ENCODE measurements at regions of chr15 and their contacts with region 1.

Region 1: GRCh38 chr15:70097337-70098169 is at the start of gene TLE3:
- DNase-seq: peak; percentile 98
- ATAC-seq: peak; percentile 67 to 80 (median 74)
- H3K4me3 ChIP-seq: peak within 1 kb of the TSS; percentile 54 to 90 (median 80)
- H3K27ac ChIP-seq: peak within 1 kb of the TSS; percentile 70 to 99 (median 94)
- H3K4me1 ChIP-seq: peaks cover 32 to 85% (median 73%) of the 10 kb centered on the region in 9 donors
- H3K27me3 ChIP-seq: peaks cover 0 to 7% (median 0%) of the 10 kb centered on the region in 7 donors
- CTCF ChIP-seq: peak; percentile 27 to 71 (median 56)
- total RNA-seq, gene TLE3: 9.7 to 21.7 (median 13.6) TPM

Region 2: DNA sequence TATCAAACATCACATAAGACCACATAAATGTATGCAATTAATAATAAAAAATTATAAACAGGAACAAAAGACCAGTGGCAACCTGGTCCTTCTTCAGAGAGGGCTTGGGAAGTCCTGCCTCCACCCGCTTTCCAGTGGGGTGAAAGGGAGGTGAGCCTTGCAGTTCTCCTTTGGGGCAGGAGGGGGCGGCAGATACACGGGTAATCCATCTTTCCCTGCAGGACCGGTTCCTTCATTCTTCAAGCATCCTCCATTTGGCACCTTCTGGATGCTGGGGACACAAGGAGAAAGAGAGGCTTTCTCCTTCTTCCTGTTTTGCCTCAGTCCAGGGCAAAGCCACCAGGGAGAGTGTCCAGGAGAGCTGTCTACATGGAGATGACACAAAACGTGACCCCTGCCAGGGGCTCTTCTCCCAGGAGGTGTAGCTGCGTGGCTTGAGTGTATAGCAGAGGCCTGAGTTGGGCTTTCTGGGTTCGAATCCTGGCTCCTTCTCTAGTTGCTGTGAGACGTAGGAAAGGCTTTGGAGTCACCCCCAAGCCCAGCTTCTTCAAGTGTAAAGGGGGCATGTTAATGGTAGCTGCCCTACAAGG is 621.7 kb before region 1 on chr15:
- intact Hi-C with region 1: loop called in 1 of 10 experiments (anchors 10 kb)
- DNase-seq: peak; percentile 73 to 81
- ATAC-seq: peak; percentile 65 to 89 (median 80)
- H3K4me3 ChIP-seq: no peak overlapping the region
- H3K27ac ChIP-seq: no peak overlapping the region
- H3K4me1 ChIP-seq: peaks cover 0 to 3% (median 0%) of the 10 kb centered on the region in 9 donors
- H3K27me3 ChIP-seq: peaks cover 0 to 8% (median 0%) of the 10 kb centered on the region in 7 donors
- CTCF ChIP-seq: peak; percentile 82 to 97 (median 94)

Region 3: DNA sequence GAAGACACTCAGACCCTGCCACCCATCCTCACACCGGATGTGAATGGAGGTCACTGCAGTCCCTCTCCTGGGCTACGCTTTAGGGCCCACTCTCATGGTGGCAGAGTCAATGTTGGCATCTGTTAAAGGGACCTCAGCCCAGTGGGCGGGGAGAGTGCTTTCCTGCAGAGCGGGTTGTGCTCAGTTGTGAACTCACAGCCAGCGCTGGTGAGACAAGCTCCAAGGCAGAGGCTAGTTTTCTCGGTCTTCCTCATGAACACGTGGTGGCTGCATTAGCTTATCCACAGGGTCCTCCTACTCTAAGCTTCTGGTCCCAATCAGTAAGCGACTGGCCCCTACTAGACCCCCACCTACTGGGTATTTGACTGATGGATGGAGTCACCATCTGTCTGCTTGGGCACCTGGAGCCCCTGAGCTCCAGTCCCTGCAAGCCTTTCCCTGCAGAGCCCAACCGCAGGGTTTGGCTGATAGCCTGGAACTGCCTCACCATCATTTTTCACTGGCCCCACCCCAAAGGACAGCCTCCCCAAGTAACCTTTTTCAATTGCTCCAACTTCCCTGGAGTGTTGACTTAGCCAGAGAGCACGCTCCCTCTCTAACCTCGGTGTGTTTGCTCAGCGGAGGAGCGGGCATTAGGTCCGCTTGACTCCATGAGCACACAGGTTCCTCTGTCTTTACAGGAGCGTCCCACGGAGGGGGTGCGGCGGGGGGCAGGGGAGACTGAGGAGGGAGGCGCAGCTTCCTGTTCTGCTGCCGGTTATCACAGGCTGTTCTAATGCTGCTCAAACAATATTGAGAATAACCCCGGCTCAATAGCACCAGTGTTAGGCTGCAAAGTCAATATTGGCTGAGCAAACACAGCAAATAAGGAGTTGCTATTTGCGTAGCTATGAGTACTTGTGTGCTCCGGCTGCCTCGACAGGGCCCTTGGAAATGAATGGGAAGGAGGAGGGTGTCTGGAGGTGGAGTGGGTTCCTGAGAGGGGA is 503.3 kb before region 1 on chr15:
- intact Hi-C with region 1: loop called in 2 of 10 experiments (anchors 5 kb)
- DNase-seq: peak; percentile 43 to 49
- ATAC-seq: peak; percentile 32 to 70 (median 55)
- H3K4me3 ChIP-seq: no peak overlapping the region
- H3K27ac ChIP-seq: peak overlapping the region; percentile 72 to 93 (median 81)
- H3K4me1 ChIP-seq: peaks cover 18 to 35% (median 28%) of the 10 kb centered on the region in 9 donors
- H3K27me3 ChIP-seq: peaks cover 0 to 10% (median 0%) of the 10 kb centered on the region in 7 donors
- CTCF ChIP-seq: no peak

Region 4: DNA sequence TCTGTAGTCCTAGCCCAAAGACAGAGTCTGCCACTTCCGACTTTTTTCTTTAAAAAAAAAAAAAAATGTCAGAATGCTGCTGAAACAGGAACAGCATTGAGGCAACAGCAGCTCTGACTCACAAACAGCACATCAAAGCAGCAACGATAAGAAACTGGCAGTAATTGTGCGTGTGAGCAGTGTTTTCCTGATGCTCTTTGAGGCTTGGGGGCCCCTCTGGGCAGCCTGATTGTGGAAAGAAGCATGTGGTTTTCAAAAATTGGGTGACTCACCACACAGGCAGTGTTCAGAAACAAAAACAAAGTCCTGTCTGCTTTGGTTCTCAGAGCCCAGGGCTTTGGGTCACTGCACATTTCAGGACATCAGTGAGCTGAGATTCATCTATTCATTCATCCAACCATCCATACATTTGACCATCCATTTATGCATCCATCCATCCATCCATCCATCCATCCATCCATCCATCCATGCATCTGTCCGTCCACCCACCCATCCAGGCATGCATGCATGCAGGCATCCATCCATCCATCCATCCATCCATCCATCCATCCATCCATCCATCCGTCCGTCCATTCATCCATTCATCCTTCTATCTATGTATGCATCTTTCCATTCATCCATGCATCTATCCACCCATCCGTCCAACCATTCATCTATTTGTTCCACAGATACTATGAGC is 336.5 kb before region 1 on chr15:
- intact Hi-C with region 1: loop called in 1 of 10 experiments (anchors 10 kb)
- DNase-seq: peak in 1 of 2 donors; percentile 20
- ATAC-seq: peak; percentile 47 to 91 (median 74)
- H3K4me3 ChIP-seq: peak overlapping the region in 1 of 10 donors; percentile 13
- H3K27ac ChIP-seq: peak overlapping the region in 2 of 10 donors; percentile 9 to 95
- H3K4me1 ChIP-seq: peaks cover 0 to 59% (median 0%) of the 10 kb centered on the region in 9 donors
- H3K27me3 ChIP-seq: peaks cover 0 to 28% (median 7%) of the 10 kb centered on the region in 7 donors
- CTCF ChIP-seq: no peak

Region 5: DNA sequence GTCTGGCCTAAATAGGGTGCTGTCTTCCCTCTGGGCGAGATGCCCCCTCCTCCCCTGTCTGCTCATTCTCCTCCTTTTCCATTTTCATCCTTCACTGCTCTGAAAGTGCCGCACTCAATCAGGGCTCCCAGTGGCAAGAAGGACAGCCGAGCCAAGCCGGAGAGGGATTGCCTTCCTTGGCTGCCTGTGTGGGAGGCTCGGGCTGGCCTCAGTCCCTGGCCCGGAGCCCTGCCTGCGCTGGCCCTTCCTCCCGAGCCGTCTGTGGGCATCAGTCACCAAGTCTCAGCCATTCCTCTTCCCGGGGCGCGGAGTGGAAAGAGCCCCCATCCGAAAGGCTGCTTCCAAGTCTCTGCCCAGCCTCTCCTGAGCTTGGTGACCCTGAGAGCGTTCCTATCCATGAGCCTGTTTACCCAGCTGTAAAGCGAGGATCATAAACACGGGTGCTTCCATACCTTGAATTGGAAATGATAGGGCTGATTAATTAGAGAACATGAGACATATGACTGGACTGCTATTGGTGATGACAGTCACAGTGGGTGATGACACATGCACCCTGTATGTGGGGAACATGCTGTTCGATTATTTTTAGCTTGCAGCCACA is 59.2 kb after region 1 on chr15:
- intact Hi-C with region 1: loop called in 3 of 10 experiments (anchors 5 to 10 kb)
- DNase-seq: peak; percentile 43 to 61
- ATAC-seq: peak in 7 of 8 donors; percentile 26 to 68 (median 59)
- H3K4me3 ChIP-seq: no peak overlapping the region
- H3K27ac ChIP-seq: no peak overlapping the region
- H3K4me1 ChIP-seq: peaks cover 28 to 77% (median 61%) of the 10 kb centered on the region in 9 donors
- H3K27me3 ChIP-seq: peaks cover 0 to 6% (median 0%) of the 10 kb centered on the region in 7 donors
- CTCF ChIP-seq: no peak

Region 6: GRCh38 chr15:70264014-70264582 is 166.5 kb after region 1 on chr15:
- intact Hi-C with region 1: loop called in 5 of 10 experiments (anchors 5 to 10 kb)
- DNase-seq: peak in 1 of 2 donors; percentile 46
- ATAC-seq: peak; percentile 26 to 80 (median 51)
- H3K4me3 ChIP-seq: peak overlapping the region in 1 of 10 donors; percentile 8
- H3K27ac ChIP-seq: peak overlapping the region in 5 of 10 donors; percentile 13 to 69 (median 29)
- H3K4me1 ChIP-seq: peaks cover 18 to 88% (median 61%) of the 10 kb centered on the region in 9 donors
- H3K27me3 ChIP-seq: no peaks in the 10 kb centered on the region
- CTCF ChIP-seq: no peak

Region 7: DNA sequence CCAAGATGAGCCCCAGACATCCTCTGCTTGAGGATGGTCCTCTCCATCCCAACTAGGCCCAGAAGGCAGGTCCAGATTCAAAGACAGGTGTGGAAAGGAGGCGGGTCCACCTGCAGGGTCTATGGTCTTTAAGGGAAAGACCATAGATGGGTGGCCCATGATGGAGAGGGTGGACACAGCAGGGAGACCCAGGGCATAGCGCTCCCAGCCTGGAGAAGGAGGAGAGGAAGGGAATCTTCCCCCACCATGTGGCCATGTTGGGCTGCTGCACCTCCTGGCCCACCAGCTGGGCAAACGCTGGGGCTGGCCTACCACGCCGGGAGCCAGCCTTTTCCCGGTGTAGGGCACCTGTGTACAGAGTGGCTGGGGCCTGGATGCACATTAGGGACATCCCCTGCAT is 265.3 kb after region 1 on chr15:
- intact Hi-C with region 1: loop called in 4 of 10 experiments (anchors 5 to 10 kb)
- DNase-seq: peak in 1 of 2 donors; percentile 32
- ATAC-seq: peak; percentile 38 to 86 (median 78)
- H3K4me3 ChIP-seq: no peak overlapping the region
- H3K27ac ChIP-seq: no peak overlapping the region
- H3K4me1 ChIP-seq: no peaks in the 10 kb centered on the region
- H3K27me3 ChIP-seq: peaks cover 0 to 43% (median 15%) of the 10 kb centered on the region in 7 donors
- CTCF ChIP-seq: peak; percentile 26 to 84 (median 77)

Measured in heart right ventricle (tissue), 16 donors.